ENCODE measurements at regions of chr5 and their contacts with region 1.

Region 1: DNA sequence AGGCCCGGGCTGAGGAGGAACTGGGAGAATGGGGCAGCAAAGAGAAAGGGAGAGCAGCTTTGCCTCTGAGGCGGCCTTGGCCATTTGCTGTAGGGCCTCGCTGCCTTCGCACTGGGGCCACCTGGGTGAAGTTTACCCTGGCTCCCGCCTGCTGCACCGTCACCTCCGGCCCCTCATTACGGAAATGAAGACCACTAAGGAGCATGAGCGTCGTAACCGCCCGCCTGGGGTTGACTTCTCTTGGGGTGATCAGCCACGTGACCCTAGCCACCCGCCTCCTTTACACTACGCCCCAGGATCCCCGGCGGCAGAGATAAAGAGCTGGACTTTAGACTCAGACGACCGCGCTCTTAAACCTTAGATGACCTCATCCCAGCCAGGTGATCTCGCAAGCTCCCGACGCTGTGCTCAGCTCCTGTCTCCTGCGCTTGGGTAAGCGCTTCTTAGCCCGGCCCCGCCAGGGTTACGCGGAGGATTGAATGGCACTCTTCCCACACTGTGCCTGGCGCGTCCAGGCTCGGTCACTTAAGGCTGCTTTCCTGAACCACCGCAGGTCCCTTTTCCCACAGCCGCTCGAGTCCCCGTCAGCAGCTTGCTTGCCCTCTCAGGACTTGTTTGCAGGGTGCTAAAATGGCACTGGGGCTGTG is 107.9 kb upstream of the LARP1 start:
- DNase-seq: peak; percentile 70 to 86 (median 79)
- ATAC-seq: peak; percentile 85
- H3K4me3 ChIP-seq: peak overlapping the region; percentile 20; the same call in 1 of the 2 replicates
- H3K27ac ChIP-seq: peak overlapping the region; percentile 24; the same call in 1 of the 3 replicates
- H3K4me1 ChIP-seq: peaks cover 29 to 38% of the 10 kb centered on the region in 2 experiments
- H3K27me3 ChIP-seq: no peaks in the 10 kb centered on the region
- CTCF ChIP-seq: no peak
- EP300 ChIP-seq: peak; percentile 57
- POLR2A ChIP-seq: no peak; the same call in 1 of the 2 replicates
- RAD21 ChIP-seq: no peak

Region 2: DNA sequence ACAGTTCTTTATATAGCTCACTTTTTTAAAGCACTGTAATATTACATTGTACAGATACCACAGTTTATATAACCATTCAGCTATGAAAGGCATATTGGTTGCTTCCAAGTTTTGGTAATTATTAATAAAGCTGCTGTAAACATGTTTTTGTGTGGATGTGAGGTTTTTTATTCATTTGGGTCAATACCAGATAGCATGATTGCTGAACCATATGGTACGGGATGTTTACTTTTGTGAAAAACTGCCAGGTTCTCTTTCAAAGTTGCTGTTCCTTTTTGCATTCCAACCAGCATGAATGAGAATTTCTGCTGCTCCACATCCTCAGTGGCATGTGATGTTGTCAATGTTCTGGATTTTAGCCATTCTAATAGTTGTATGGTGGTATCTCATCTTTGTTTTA is 1802.5 kb before region 1 on chr5:
- CTCF ChIA-PET with region 1: no interaction called
- POLR2A ChIA-PET with region 1: no interaction called
- in situ Hi-C with region 1: no loop called
- intact Hi-C with region 1: no loop called
- DNase-seq: no peak
- ATAC-seq: no peak
- H3K4me3 ChIP-seq: no peak overlapping the region
- H3K27ac ChIP-seq: no peak overlapping the region
- H3K4me1 ChIP-seq: no peaks in the 10 kb centered on the region
- H3K27me3 ChIP-seq: no peaks in the 10 kb centered on the region
- CTCF ChIP-seq: no peak
- EP300 ChIP-seq: no peak
- POLR2A ChIP-seq: no peak
- RAD21 ChIP-seq: no peak

Region 3: DNA sequence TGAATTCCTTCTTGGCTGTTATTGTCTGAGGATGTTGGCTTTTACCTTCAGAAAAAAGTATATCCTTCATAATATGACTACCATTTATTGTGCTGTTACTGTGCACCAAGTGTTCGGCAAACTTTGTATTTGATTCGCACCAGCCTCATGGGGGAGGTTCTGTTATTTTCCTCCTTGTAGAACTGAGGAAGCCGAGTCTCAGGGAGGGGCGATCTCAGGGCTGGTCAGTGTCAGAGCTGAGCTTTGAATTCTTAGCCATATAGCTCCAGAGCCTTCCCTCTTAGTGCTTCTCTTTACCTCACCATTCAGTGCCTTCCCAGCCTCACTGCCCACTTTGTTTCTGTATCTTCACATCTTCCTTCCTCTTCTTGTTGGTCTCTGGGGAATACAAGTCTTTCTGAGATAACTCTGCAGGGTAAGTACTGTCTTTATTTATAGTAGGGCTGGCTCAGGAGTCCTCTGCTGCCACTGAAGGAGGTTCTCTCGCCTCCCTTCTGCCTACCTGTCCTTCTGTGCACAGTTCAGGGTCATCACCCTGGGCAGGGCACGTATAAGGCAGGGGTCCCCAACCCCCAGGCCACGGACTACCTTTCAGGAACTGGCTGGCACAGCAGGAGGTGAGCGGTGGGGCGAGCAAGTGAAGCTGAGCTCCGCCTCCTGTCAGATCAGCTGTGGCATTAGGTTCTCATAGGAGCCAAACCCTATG is 408.3 kb before region 1 on chr5:
- CTCF ChIA-PET with region 1: no interaction called
- POLR2A ChIA-PET with region 1: no interaction called
- in situ Hi-C with region 1: no loop called
- intact Hi-C with region 1: no loop called
- DNase-seq: no peak
- ATAC-seq: no peak; the same call in 1 of the 3 replicates
- H3K4me3 ChIP-seq: no peak overlapping the region
- H3K27ac ChIP-seq: no peak overlapping the region
- H3K4me1 ChIP-seq: peaks cover 0 to 5% of the 10 kb centered on the region in 2 experiments; a peak in 2 of 5 replicates
- H3K27me3 ChIP-seq: no peaks in the 10 kb centered on the region
- CTCF ChIP-seq: no peak
- EP300 ChIP-seq: no peak
- POLR2A ChIP-seq: no peak
- RAD21 ChIP-seq: no peak

Region 4: DNA sequence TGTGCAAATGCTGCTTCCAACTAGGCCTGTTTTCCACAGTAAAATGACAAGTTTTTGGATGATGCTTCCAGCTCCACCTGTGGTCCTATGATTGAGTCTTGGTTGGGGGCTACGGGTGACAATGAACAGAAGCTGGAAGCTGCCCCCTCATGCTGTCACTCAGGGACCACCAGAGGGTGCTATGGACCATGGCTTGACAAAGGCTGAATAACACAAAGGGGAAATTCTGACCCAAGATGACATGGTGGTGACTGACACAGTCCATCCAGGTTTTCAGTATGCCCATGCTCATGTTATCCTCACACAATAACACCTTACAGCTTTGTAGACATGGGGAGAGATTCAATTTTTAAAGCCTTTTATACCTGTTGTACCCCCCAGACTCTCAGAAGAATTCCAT is 225.4 kb before region 1 on chr5:
- CTCF ChIA-PET with region 1: no interaction called
- POLR2A ChIA-PET with region 1: no interaction called
- in situ Hi-C with region 1: no loop called
- intact Hi-C with region 1: loop called (anchors 2 kb)
- DNase-seq: peak; percentile 45 to 66 (median 56)
- ATAC-seq: peak; percentile 94
- H3K4me3 ChIP-seq: no peak overlapping the region
- H3K27ac ChIP-seq: no peak overlapping the region
- H3K4me1 ChIP-seq: peaks cover 0 to 8% of the 10 kb centered on the region in 2 experiments; a peak in 2 of 5 replicates
- H3K27me3 ChIP-seq: no peaks in the 10 kb centered on the region
- CTCF ChIP-seq: peak; percentile 67 to 80 (median 73)
- EP300 ChIP-seq: no peak
- POLR2A ChIP-seq: no peak
- RAD21 ChIP-seq: peak; percentile 21 to 64; a peak in 2 of 4 replicates

Region 5: GRCh38 chr5:154811653-154812365 is 164.6 kb after region 1 on chr5:
- CTCF ChIA-PET with region 1: interaction called, 24 read pairs
- POLR2A ChIA-PET with region 1: interaction called, 3 read pairs
- in situ Hi-C with region 1: loop called (anchors 10 kb)
- intact Hi-C with region 1: loop called (anchors 1 kb)
- DNase-seq: peak; percentile 57 to 71 (median 62)
- ATAC-seq: peak; percentile 84
- H3K4me3 ChIP-seq: no peak overlapping the region
- H3K27ac ChIP-seq: no peak overlapping the region
- H3K4me1 ChIP-seq: peaks cover 3 to 4% of the 10 kb centered on the region in 2 experiments; a peak in 3 of 5 replicates
- H3K27me3 ChIP-seq: no peaks in the 10 kb centered on the region
- CTCF ChIP-seq: peak; percentile 80 to 88 (median 82)
- EP300 ChIP-seq: no peak
- POLR2A ChIP-seq: no peak
- RAD21 ChIP-seq: peak; percentile 85

Region 6: GRCh38 chr5:154995679-154996078 is 348.4 kb after region 1 on chr5:
- CTCF ChIA-PET with region 1: no interaction called
- POLR2A ChIA-PET with region 1: no interaction called
- in situ Hi-C with region 1: loop called (anchors 10 kb)
- intact Hi-C with region 1: loop called (anchors 1 kb)
- DNase-seq: peak in 1 of 4 experiments; percentile 12
- ATAC-seq: peak; percentile 75
- H3K4me3 ChIP-seq: no peak overlapping the region
- H3K27ac ChIP-seq: no peak overlapping the region
- H3K4me1 ChIP-seq: no peaks in the 10 kb centered on the region; a peak in 1 of 5 replicates
- H3K27me3 ChIP-seq: peaks cover 3 to 4% of the 10 kb centered on the region in 2 experiments; a peak in 3 of 5 replicates
- CTCF ChIP-seq: peak; percentile 30 to 45 (median 31); a peak in 4 of 6 replicates
- EP300 ChIP-seq: no peak
- POLR2A ChIP-seq: no peak
- RAD21 ChIP-seq: peak in 1 of 2 experiments; percentile 38; a peak in 2 of 4 replicates

Region 7: DNA sequence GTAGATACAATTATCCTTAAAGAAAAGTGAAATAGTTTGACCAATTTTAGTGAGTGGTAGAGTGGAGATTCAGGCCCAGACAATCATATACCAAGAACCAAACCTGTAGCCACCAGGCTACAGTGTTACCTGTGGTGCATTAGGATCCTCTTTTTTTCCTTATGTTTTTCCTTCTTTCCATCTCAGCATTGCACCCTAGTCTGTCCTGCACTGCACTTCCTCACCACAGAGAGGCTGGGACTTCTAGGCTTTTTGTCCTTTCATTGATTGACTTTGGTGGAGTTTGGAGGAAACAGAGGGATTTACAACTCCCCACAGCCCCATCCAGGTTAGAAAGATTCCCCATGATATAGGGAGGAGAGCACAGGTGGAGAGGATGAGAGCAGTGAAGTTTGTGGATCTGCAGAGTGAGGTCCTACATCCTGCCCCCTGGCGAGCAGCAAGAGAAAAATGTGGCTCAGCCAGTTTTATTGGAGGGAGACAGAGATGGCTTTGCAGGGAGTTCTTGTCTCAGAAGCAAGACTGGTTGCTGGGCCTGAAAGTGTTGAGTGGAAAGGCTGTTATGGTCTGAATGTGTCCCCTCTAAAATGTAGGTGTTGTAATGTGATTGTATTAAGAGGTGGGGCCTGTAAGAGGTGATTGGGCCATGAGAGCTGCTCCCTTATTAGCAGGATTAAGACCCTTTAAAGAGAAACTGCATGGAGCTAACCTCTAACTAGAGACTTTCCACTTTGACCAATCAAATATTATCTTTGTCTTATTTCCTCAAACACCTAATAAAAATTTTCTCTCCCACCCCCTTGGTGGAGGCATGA is 402.5 kb after region 1 on chr5:
- CTCF ChIA-PET with region 1: interaction called, 3 read pairs
- POLR2A ChIA-PET with region 1: interaction called, 3 read pairs
- in situ Hi-C with region 1: no loop called
- intact Hi-C with region 1: loop called (anchors 2 kb)
- DNase-seq: peak in 2 of 4 experiments; percentile 20 to 39
- ATAC-seq: peak; percentile 83
- H3K4me3 ChIP-seq: no peak overlapping the region
- H3K27ac ChIP-seq: no peak overlapping the region
- H3K4me1 ChIP-seq: no peaks in the 10 kb centered on the region
- H3K27me3 ChIP-seq: no peaks in the 10 kb centered on the region; a peak in 1 of 5 replicates
- CTCF ChIP-seq: peak; percentile 51 to 69 (median 62)
- EP300 ChIP-seq: no peak
- POLR2A ChIP-seq: no peak
- RAD21 ChIP-seq: peak; percentile 21 to 44; a peak in 2 of 4 replicates

Region 8: DNA sequence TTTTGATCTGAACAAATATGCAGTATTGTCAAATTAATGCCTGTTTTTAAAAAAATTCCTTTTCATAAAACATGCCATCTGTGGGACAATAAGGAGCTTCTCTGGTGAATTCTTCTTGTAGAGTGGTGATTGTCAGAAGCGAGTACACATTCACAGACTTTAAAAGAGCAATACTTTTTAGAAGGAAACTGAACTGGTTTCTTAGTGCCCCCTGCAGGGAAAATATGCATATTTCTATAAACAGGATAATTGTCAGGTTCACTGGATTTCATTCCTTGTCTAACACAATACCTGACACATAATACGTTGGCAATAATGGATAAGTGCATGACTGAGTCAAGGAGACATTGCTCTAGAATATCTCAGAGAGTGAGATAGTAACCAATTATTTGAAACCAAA is 500.0 kb after region 1 on chr5:
- CTCF ChIA-PET with region 1: no interaction called
- POLR2A ChIA-PET with region 1: no interaction called
- in situ Hi-C with region 1: loop called (anchors 5 kb)
- intact Hi-C with region 1: loop called (anchors 1 kb)
- DNase-seq: peak in 2 of 4 experiments; percentile 3 to 15
- ATAC-seq: peak; percentile 34; the same call in 1 of the 3 replicates
- H3K4me3 ChIP-seq: no peak overlapping the region
- H3K27ac ChIP-seq: no peak overlapping the region
- H3K4me1 ChIP-seq: no peaks in the 10 kb centered on the region
- H3K27me3 ChIP-seq: no peaks in the 10 kb centered on the region
- CTCF ChIP-seq: peak in 2 of 3 experiments; percentile 28 to 52; a peak in 3 of 6 replicates
- EP300 ChIP-seq: no peak
- POLR2A ChIP-seq: no peak
- RAD21 ChIP-seq: peak; percentile 45 to 50

Measured in K562 (cell line).